ENCODE measurements at regions of chr14 and their contacts with region 1.

Region 1: GRCh38 chr14:51283402-51284085 is 43.5 kb downstream of the TMX1 start:
- DNase-seq: peak; percentile 57
- ATAC-seq: peak; percentile 43
- H3K4me3 ChIP-seq: no peak overlapping the region
- H3K4me3 Mint-ChIP-seq: no peak overlapping the region
- H3K27ac ChIP-seq: no peak overlapping the region
- H3K27ac Mint-ChIP-seq: no peak overlapping the region
- H3K4me1 ChIP-seq: no peaks in the 10 kb centered on the region
- H3K4me1 Mint-ChIP-seq: peaks cover 6% of the 10 kb centered on the region
- H3K27me3 ChIP-seq: no peaks in the 10 kb centered on the region
- H3K27me3 Mint-ChIP-seq: no peaks in the 10 kb centered on the region
- CTCF ChIP-seq: peak; percentile 90

Region 2: GRCh38 chr14:50798048-50798421 is 485.5 kb before region 1 on chr14:
- CTCF ChIA-PET with region 1: no interaction called
- POLR2A ChIA-PET with region 1: no interaction called
- intact Hi-C with region 1: no loop called
- DNase-seq: peak; percentile 69
- ATAC-seq: peak; percentile 78
- H3K4me3 ChIP-seq: no peak overlapping the region
- H3K4me3 Mint-ChIP-seq: peak overlapping the region; percentile 2
- H3K27ac ChIP-seq: no peak overlapping the region
- H3K27ac Mint-ChIP-seq: peak overlapping the region; percentile 53
- H3K4me1 ChIP-seq: peaks cover 56 to 64% of the 10 kb centered on the region in 2 donors
- H3K4me1 Mint-ChIP-seq: peaks cover 74% of the 10 kb centered on the region
- H3K27me3 ChIP-seq: no peaks in the 10 kb centered on the region
- H3K27me3 Mint-ChIP-seq: no peaks in the 10 kb centered on the region
- CTCF ChIP-seq: no peak

Region 3: GRCh38 chr14:51239813-51240803 is 43.4 kb before region 1 on chr14 and contains the start of gene TMX1:
- CTCF ChIA-PET with region 1: interaction called, 3 read pairs
- POLR2A ChIA-PET with region 1: no interaction called
- intact Hi-C with region 1: loop called (anchors 2 kb)
- DNase-seq: peak; percentile 91
- ATAC-seq: peak; percentile 91
- H3K4me3 ChIP-seq: peak within 1 kb of the TSS; percentile 77 to 98 (median 90)
- H3K4me3 Mint-ChIP-seq: no peak within 1 kb of the TSS
- H3K27ac ChIP-seq: peak within 1 kb of the TSS; percentile 74 to 85
- H3K27ac Mint-ChIP-seq: no peak within 1 kb of the TSS
- H3K4me1 ChIP-seq: peaks cover 16 to 25% of the 10 kb centered on the region in 2 donors
- H3K4me1 Mint-ChIP-seq: peaks cover 28% of the 10 kb centered on the region
- H3K27me3 ChIP-seq: no peaks in the 10 kb centered on the region
- H3K27me3 Mint-ChIP-seq: no peaks in the 10 kb centered on the region
- CTCF ChIP-seq: no peak
- total RNA-seq, gene TMX1: 26.4 and 28.6 TPM in 2 replicates

Region 4: DNA sequence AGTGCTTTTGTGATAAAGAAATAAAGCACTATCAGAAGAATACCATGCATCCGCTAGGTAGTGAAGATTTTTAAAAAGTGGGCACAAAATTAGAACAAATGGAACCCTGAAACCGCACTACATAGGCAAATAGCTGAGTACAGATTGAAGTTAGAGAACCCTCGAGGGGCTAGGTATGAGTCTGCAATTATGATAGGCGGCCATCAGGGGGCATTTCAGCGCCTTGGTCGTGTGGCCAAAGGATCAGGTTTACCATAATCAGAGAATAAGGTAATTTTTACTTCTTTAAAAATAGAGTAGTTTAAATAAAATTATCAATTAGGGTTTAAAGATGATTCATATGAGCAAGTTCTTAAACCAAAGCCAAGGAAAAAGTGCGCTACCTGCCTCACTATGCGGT is 86.3 kb after region 1 on chr14:
- CTCF ChIA-PET with region 1: no interaction called
- POLR2A ChIA-PET with region 1: no interaction called
- intact Hi-C with region 1: no loop called
- DNase-seq: no peak
- ATAC-seq: no peak
- H3K4me3 ChIP-seq: no peak overlapping the region
- H3K4me3 Mint-ChIP-seq: no peak overlapping the region
- H3K27ac ChIP-seq: no peak overlapping the region
- H3K27ac Mint-ChIP-seq: no peak overlapping the region
- H3K4me1 ChIP-seq: no peaks in the 10 kb centered on the region
- H3K4me1 Mint-ChIP-seq: no peaks in the 10 kb centered on the region
- H3K27me3 ChIP-seq: no peaks in the 10 kb centered on the region
- H3K27me3 Mint-ChIP-seq: peaks cover 12% of the 10 kb centered on the region
- CTCF ChIP-seq: no peak

Region 5: DNA sequence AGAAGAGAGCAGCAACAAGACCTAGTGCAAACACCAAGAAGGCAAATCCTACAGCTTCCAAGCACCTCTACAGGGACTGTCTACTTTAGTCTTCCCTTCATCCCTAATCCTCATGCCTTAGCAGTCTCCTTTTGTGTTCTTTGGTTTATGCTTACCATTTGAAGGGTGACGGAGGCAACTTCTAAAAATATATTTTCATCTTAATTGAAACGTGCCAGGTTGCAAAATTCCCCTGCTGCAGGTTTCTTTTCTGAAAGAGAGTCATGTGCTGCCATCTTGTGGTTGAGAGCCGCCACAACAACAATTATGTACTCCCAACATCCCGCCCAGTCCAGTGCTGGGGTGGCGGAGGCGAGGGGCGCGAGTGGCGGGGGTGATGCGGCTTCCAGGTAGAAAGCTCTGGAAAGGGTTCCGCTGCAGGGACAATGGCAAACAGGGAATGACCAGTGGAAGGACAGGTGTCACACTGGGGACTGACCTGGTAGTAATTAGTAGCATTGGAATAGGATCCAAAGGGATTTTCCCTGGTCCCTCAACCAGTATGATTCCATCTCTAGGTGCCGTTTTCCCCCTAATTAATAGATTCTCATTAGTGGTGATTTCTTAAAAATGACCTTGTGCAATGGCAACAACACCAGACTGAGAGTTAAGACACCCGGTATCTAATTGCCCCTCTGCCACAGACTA is 496.6 kb after region 1 on chr14:
- CTCF ChIA-PET with region 1: interaction called, 37 read pairs
- POLR2A ChIA-PET with region 1: no interaction called
- intact Hi-C with region 1: no loop called
- DNase-seq: peak; percentile 80
- ATAC-seq: peak; percentile 80
- H3K4me3 ChIP-seq: no peak overlapping the region
- H3K4me3 Mint-ChIP-seq: no peak overlapping the region
- H3K27ac ChIP-seq: no peak overlapping the region
- H3K27ac Mint-ChIP-seq: no peak overlapping the region
- H3K4me1 ChIP-seq: peaks cover 7 to 11% of the 10 kb centered on the region in 2 donors
- H3K4me1 Mint-ChIP-seq: peaks cover 10% of the 10 kb centered on the region
- H3K27me3 ChIP-seq: peaks cover 0 to 16% (median 4%) of the 10 kb centered on the region in 4 experiments
- H3K27me3 Mint-ChIP-seq: peaks cover 32% of the 10 kb centered on the region
- CTCF ChIP-seq: peak; percentile 90

Region 6: GRCh38 chr14:52791203-52792096 is 1507.9 kb after region 1 on chr14 and contains the start of gene GNPNAT1:
- CTCF ChIA-PET with region 1: no interaction called
- POLR2A ChIA-PET with region 1: no interaction called
- intact Hi-C with region 1: loop called (anchors 5 kb)
- DNase-seq: peak; percentile 89
- ATAC-seq: peak; percentile 96
- H3K4me3 ChIP-seq: peak within 1 kb of the TSS; percentile 58 to 87 (median 80)
- H3K4me3 Mint-ChIP-seq: peak within 1 kb of the TSS; percentile 89
- H3K27ac ChIP-seq: peak within 1 kb of the TSS; percentile 35 to 58
- H3K27ac Mint-ChIP-seq: peak within 1 kb of the TSS; percentile 86
- H3K4me1 ChIP-seq: peaks cover 14 to 20% of the 10 kb centered on the region in 2 donors
- H3K4me1 Mint-ChIP-seq: peaks cover 26% of the 10 kb centered on the region
- H3K27me3 ChIP-seq: no peaks in the 10 kb centered on the region
- H3K27me3 Mint-ChIP-seq: no peaks in the 10 kb centered on the region
- CTCF ChIP-seq: no peak
- total RNA-seq, gene GNPNAT1: 7.8 and 8.3 TPM in 2 replicates